ENCODE measurements at regions of chr12 and their contacts with region 1.

Region 1: DNA sequence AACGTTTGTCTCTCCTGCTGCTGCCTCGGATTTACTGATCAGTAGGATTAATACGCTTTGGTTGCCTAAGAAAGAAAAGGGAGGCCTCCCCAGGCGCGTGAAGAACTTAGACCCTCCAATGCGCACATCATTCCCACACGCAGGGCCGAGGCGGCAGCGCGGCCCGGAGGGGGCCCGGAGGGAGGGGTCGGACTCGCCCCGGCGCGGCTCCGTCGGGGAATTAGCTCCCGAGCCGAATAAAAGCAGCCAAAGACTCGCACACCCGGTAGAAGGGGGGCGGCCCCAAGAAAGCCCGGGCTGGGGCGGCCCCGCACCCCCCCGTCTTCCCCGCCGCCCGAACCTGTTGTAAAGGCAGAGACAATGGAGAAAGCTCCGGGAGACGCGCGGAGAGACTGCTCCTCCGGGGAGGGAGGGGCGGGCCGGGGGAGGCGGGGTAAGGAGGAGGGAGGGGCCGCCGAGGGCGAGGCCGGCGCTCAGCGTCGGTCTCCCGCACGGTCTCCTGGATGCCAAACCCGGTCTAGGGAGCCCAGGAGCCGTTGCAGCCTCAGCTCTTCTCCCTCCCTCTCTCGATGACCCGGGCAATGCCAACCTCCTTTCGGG is at the start of gene NELL2:
- DNase-seq: peak; percentile 46 to 85 (median 66)
- ATAC-seq: peak; percentile 67 to 69
- H3K4me3 Mint-ChIP-seq: peak within 1 kb of the TSS; percentile 95 to 100 (median 98)
- H3K27ac Mint-ChIP-seq: peak within 1 kb of the TSS; percentile 92 to 98 (median 96)
- H3K4me1 Mint-ChIP-seq: peaks cover 11 to 40% (median 23%) of the 10 kb centered on the region in 4 donors
- H3K27me3 Mint-ChIP-seq: peaks cover 0 to 19% (median 0%) of the 10 kb centered on the region in 5 donors
- polyA plus RNA-seq, gene NELL2: 320 to 498 (median 397) TPM

Region 2: GRCh38 chr12:44812062-44812461 is 64.0 kb before region 1 on chr12:
- POLR2A ChIA-PET with region 1: interaction called, 121 read pairs
- DNase-seq: peak in 9 of 10 donors; percentile 27 to 77 (median 69)
- ATAC-seq: peak; percentile 79 to 89
- H3K4me3 Mint-ChIP-seq: peak overlapping the region in 7 of 10 donors; percentile 10 to 66 (median 51)
- H3K27ac Mint-ChIP-seq: peak overlapping the region; percentile 59 to 90 (median 82)
- H3K4me1 Mint-ChIP-seq: peaks cover 34 to 69% (median 63%) of the 10 kb centered on the region in 4 donors
- H3K27me3 Mint-ChIP-seq: no peaks in the 10 kb centered on the region

Region 3: GRCh38 chr12:44827832-44828438 is 48.1 kb before region 1 on chr12:
- POLR2A ChIA-PET with region 1: interaction called, 46 read pairs
- DNase-seq: peak in 4 of 10 donors; percentile 34 to 88 (median 76)
- ATAC-seq: peak; percentile 83 to 93
- H3K4me3 Mint-ChIP-seq: peak overlapping the region; percentile 55 to 87 (median 77)
- H3K27ac Mint-ChIP-seq: peak overlapping the region; percentile 92 to 97 (median 96)
- H3K4me1 Mint-ChIP-seq: peaks cover 30 to 74% (median 65%) of the 10 kb centered on the region in 4 donors
- H3K27me3 Mint-ChIP-seq: no peaks in the 10 kb centered on the region

Region 4: GRCh38 chr12:44842669-44843068 is 33.4 kb before region 1 on chr12:
- POLR2A ChIA-PET with region 1: interaction called, 95 read pairs
- DNase-seq: peak in 4 of 10 donors; percentile 33 to 58 (median 50)
- ATAC-seq: peak; percentile 55 to 76
- H3K4me3 Mint-ChIP-seq: peak overlapping the region; percentile 70 to 89 (median 84)
- H3K27ac Mint-ChIP-seq: peak overlapping the region; percentile 87 to 97 (median 94)
- H3K4me1 Mint-ChIP-seq: peaks cover 37 to 84% (median 77%) of the 10 kb centered on the region in 4 donors
- H3K27me3 Mint-ChIP-seq: no peaks in the 10 kb centered on the region

Region 5: GRCh38 chr12:44863867-44864266 is 12.2 kb before region 1 on chr12:
- POLR2A ChIA-PET with region 1: interaction called, 14 read pairs
- DNase-seq: peak in 3 of 10 donors; percentile 61 to 80 (median 77)
- ATAC-seq: peak; percentile 77 to 93
- H3K4me3 Mint-ChIP-seq: peak overlapping the region; percentile 0 to 66 (median 38)
- H3K27ac Mint-ChIP-seq: peak overlapping the region; percentile 49 to 95 (median 88)
- H3K4me1 Mint-ChIP-seq: peaks cover 18 to 72% (median 67%) of the 10 kb centered on the region in 4 donors
- H3K27me3 Mint-ChIP-seq: no peaks in the 10 kb centered on the region

Measured in naive thymus-derived CD8-positive, alpha-beta T cell (primary cell).